ENCODE measurements at regions of chr15 and their contacts with region 1.

Region 1: GRCh38 chr15:29242456-29243242 is 27.0 kb downstream of the NSMCE3 start:
- DNase-seq: no peak
- H3K4me3 ChIP-seq: no peak overlapping the region
- H3K27ac ChIP-seq: no peak overlapping the region
- H3K4me1 ChIP-seq: no peaks in the 10 kb centered on the region
- H3K27me3 ChIP-seq: no peaks in the 10 kb centered on the region
- CTCF ChIP-seq: no peak
- POLR2A ChIP-seq: no peak

Region 2: DNA sequence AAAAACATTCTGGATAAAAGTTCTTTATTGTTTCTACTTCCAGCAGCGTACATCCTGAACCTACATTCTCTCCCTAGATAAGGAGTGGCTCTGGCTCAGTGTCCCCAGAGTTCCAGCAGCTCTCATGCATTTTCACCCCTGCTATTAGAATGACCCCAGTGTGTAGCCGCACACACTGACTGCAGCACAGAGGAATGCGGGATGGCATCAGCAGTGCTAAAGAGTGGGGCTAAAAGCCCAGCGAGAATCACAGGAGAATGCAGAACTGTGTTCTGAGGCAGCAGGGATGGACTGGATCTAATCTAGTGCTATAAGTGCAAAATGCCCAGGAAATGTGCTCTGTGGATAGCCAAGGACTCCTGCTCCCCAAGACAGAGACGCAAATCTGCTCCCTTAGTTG is 646.0 kb after region 1 on chr15:
- CTCF ChIA-PET with region 1: no interaction called
- POLR2A ChIA-PET with region 1: no interaction called
- dilution Hi-C with region 1: no loop called
- intact Hi-C with region 1: loop called (anchors 10 kb)
- DNase-seq: no peak
- H3K4me3 ChIP-seq: no peak overlapping the region
- H3K27ac ChIP-seq: no peak overlapping the region
- H3K4me1 ChIP-seq: no peaks in the 10 kb centered on the region
- H3K27me3 ChIP-seq: peaks cover 4 to 18% of the 10 kb centered on the region in 2 experiments
- CTCF ChIP-seq: no peak
- POLR2A ChIP-seq: no peak